ENCODE measurements at regions of chr22 and their contacts with region 1.

Region 1: DNA sequence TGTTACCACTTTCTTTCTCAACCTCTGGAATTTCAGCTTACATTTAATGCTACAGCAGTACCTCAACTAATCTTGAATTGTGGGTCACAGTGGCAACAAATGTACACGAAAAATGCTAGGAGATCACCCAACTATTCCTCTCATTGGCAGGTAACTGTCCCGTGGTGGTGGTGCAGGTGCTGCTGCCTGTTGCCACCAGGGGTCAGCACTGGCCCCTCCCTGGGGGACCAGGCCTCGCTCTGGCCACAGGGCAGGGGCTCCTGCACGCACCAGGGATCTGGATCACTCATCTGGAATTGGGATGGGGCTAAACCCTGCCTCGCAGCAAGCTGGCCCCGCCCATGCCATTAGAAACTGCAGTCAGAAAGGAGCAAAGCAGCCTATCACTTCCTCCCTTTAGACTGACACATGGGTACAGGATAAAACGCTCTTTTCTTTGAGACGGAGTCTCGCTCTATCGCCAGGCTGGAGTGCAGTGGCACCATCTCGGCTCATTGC is 6.9 kb upstream of the POLDIP3 start:
- DNase-seq: peak; percentile 69
- ATAC-seq: peak; percentile 76
- H3K4me3 ChIP-seq: no peak overlapping the region; the same call in 1 of the 2 replicates
- H3K27ac ChIP-seq: peak overlapping the region; percentile 82
- H3K4me1 ChIP-seq: peaks cover 15% of the 10 kb centered on the region
- H3K27me3 ChIP-seq: no peaks in the 10 kb centered on the region
- CTCF ChIP-seq: peak; percentile 83

Region 2: GRCh38 chr22:42553475-42554361 is 67.8 kb before region 1 on chr22 and contains the start of gene SERHL2:
- CTCF ChIA-PET with region 1: no interaction called
- POLR2A ChIA-PET with region 1: no interaction called
- intact Hi-C with region 1: no loop called
- DNase-seq: peak; percentile 72
- ATAC-seq: peak; percentile 93
- H3K4me3 ChIP-seq: peak within 1 kb of the TSS; percentile 67
- H3K27ac ChIP-seq: no peak within 1 kb of the TSS
- H3K4me1 ChIP-seq: no peaks in the 10 kb centered on the region
- H3K27me3 ChIP-seq: no peaks in the 10 kb centered on the region
- CTCF ChIP-seq: no peak
- total RNA-seq, gene SERHL2: 4.9 and 5.4 TPM in 2 replicates

Region 3: GRCh38 chr22:42635531-42635930 is 14.0 kb after region 1 on chr22:
- CTCF ChIA-PET with region 1: no interaction called
- POLR2A ChIA-PET with region 1: interaction called, 12 read pairs
- intact Hi-C with region 1: no loop called
- DNase-seq: peak; percentile 76
- ATAC-seq: peak; percentile 99
- H3K4me3 ChIP-seq: no peak overlapping the region
- H3K27ac ChIP-seq: peak overlapping the region; percentile 62
- H3K4me1 ChIP-seq: peaks cover 11% of the 10 kb centered on the region
- H3K27me3 ChIP-seq: no peaks in the 10 kb centered on the region
- CTCF ChIP-seq: no peak

Region 4: GRCh38 chr22:42649246-42650099 is 27.9 kb after region 1 on chr22 and contains the start of gene CYB5R3:
- CTCF ChIA-PET with region 1: interaction called, 3 read pairs
- POLR2A ChIA-PET with region 1: interaction called, 11 read pairs
- intact Hi-C with region 1: no loop called
- DNase-seq: peak; percentile 55
- ATAC-seq: peak; percentile 83
- H3K4me3 ChIP-seq: peak within 1 kb of the TSS; percentile 98
- H3K27ac ChIP-seq: peak within 1 kb of the TSS; percentile 41
- H3K4me1 ChIP-seq: peaks cover 9% of the 10 kb centered on the region
- H3K27me3 ChIP-seq: no peaks in the 10 kb centered on the region
- CTCF ChIP-seq: no peak
- total RNA-seq, gene CYB5R3: 64.2 and 73.3 TPM in 2 replicates